ENCODE measurements at regions of chr15 and their contacts with region 1.

Region 1: DNA sequence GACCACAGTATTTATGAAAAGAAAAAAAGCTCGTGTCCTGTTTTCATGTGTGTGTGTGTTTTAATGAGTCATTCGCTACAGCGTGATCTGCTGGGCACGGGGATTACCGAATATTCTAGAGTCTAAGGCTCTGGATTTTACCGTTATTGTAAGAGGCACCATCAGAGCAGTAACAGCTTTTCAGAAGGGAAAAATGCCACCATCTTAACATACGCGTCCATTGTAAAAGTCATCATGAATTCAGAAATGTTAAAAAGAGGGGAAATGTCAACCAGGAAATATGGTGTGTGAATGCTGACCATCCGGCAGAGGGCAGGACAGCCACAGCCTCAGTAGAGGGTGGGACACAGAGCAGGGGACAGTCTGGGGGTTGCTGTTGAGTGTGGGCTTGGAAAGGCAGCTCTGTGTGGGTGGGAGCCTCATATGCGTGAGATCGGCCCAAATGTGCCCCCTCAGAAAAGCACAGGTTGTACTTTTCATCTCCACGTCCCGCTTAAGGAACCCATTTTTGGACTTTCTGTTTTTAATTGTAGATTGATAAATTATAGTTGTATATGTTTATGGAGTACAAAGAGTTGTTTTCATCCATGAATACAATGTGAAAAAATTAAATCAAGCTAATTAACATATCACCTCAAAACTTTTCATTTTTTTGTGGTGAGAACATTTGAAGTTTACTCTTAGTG is 69.6 kb downstream of the ASB7 start:
- DNase-seq: peak; percentile 85
- H3K4me3 ChIP-seq: no peak overlapping the region
- H3K27ac ChIP-seq: peak overlapping the region in 1 of 2 experiments; percentile 74; a peak in 2 of 4 replicates
- H3K4me1 ChIP-seq: peaks cover 0 to 23% of the 10 kb centered on the region in 2 experiments; a peak in 2 of 4 replicates
- H3K27me3 ChIP-seq: no peaks in the 10 kb centered on the region
- CTCF ChIP-seq: peak; percentile 76
- EP300 ChIP-seq: no peak
- RAD21 ChIP-seq: peak; percentile 93

Region 2: GRCh38 chr15:100508641-100509300 is 163.2 kb before region 1 on chr15:
- CTCF ChIA-PET with region 1: no interaction called
- POLR2A ChIA-PET with region 1: no interaction called
- DNase-seq: no peak
- H3K4me3 ChIP-seq: no peak overlapping the region
- H3K27ac ChIP-seq: no peak overlapping the region
- H3K4me1 ChIP-seq: peaks cover 0 to 3% of the 10 kb centered on the region in 2 experiments; a peak in 1 of 4 replicates
- H3K27me3 ChIP-seq: no peaks in the 10 kb centered on the region
- CTCF ChIP-seq: no peak
- EP300 ChIP-seq: no peak
- RAD21 ChIP-seq: no peak

Region 3: GRCh38 chr15:100602064-100602822 is 69.8 kb before region 1 on chr15 and contains the starts of genes ASB7 and LINS1:
- CTCF ChIA-PET with region 1: no interaction called
- POLR2A ChIA-PET with region 1: no interaction called
- DNase-seq: peak; percentile 94
- H3K4me3 ChIP-seq: peak within 1 kb of the TSS; percentile 89 to 99
- H3K27ac ChIP-seq: peak within 1 kb of the TSS; percentile 63 to 87
- H3K4me1 ChIP-seq: peaks cover 5 to 18% of the 10 kb centered on the region in 2 experiments; a peak in 3 of 4 replicates
- H3K27me3 ChIP-seq: no peaks in the 10 kb centered on the region
- CTCF ChIP-seq: no peak
- EP300 ChIP-seq: peak in 1 of 2 experiments; percentile 4; a peak in 1 of 4 replicates
- RAD21 ChIP-seq: no peak
- polyA plus RNA-seq, gene ASB7: 6.1 and 7.7 TPM in 2 replicates
- polyA plus RNA-seq, gene LINS1: 5.0 and 6.9 TPM in 2 replicates

Region 4: DNA sequence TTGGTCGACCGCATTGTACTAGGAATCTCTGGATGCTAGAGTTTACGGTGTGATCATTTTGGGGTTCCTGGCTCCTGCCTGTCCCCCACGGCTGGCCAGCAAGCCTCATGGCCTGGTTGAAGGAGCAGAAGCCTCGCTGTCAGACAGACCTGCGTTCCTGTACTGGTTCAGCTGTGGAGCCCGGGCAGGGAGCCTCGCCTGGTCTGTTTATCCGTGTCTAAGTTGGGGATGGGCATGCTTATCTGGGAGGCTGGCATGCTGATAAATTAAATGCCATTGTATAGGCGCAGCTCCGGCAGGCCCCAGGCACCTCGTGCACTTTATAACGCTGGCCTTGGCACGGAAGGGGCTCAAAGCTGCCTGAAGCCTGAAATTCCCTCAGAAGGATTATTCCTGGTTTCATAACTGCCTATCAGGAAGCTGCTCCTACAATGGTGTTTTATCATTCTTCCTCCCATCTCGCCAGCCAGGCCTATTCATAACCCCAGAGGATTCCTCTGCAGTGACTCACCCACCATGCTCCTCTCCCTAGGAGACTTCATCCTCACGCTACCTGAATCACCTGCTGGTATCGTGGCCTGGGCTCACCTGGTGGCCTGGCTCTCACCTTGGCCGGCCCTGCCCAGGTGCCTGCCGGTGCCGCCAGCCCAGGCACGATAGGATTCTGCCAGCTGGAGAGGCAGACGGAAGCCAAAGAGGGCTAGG is 41.3 kb after region 1 on chr15:
- CTCF ChIA-PET with region 1: no interaction called
- POLR2A ChIA-PET with region 1: no interaction called
- DNase-seq: no peak
- H3K4me3 ChIP-seq: no peak overlapping the region
- H3K27ac ChIP-seq: peak overlapping the region in 1 of 2 experiments; percentile 71; a peak in 2 of 4 replicates
- H3K4me1 ChIP-seq: peaks cover 12 to 24% of the 10 kb centered on the region in 2 experiments; a peak in 3 of 4 replicates
- H3K27me3 ChIP-seq: no peaks in the 10 kb centered on the region
- CTCF ChIP-seq: no peak
- EP300 ChIP-seq: no peak
- RAD21 ChIP-seq: no peak

Region 5: DNA sequence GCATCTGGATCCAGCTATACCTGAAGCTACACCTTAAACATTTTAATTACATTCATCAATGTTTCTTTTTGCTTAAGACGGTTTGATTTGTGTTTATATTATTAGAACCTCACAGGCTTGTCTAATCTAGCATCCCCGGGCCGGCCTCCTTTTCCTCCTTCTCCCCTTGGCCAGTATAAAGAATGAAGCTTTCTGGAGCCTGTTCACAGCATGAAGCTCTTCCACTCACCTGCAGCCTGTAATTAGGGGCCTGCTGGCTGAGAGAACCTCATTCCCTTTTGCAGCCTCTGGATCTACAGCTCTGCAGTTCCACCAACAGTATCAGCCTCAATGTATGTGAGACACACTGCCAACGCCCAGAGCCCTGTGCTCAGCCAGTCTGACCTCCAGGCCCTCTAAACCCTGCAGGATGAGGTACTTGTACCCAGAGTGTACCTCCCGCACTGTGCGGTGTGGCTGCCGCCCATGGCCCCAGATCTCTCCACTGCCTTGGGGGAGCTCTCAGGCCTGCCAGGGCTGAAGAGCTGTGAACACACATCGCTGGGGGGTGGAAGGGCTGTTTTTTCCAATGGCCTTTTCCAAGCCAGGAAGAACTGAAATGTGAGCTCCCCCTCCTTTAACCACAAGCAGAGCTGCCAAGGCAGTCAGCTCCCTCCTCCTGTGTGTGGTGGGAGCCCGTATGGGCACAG is 92.9 kb after region 1 on chr15:
- CTCF ChIA-PET with region 1: interaction called, 14 read pairs
- POLR2A ChIA-PET with region 1: no interaction called
- DNase-seq: peak; percentile 45
- H3K4me3 ChIP-seq: no peak overlapping the region
- H3K27ac ChIP-seq: peak overlapping the region; percentile 44 to 94; a peak in 3 of 4 replicates
- H3K4me1 ChIP-seq: peaks cover 8 to 80% of the 10 kb centered on the region in 2 experiments; a peak in 3 of 4 replicates
- H3K27me3 ChIP-seq: no peaks in the 10 kb centered on the region
- CTCF ChIP-seq: no peak
- EP300 ChIP-seq: peak in 1 of 2 experiments; percentile 68; a peak in 1 of 4 replicates
- RAD21 ChIP-seq: no peak

Region 6: DNA sequence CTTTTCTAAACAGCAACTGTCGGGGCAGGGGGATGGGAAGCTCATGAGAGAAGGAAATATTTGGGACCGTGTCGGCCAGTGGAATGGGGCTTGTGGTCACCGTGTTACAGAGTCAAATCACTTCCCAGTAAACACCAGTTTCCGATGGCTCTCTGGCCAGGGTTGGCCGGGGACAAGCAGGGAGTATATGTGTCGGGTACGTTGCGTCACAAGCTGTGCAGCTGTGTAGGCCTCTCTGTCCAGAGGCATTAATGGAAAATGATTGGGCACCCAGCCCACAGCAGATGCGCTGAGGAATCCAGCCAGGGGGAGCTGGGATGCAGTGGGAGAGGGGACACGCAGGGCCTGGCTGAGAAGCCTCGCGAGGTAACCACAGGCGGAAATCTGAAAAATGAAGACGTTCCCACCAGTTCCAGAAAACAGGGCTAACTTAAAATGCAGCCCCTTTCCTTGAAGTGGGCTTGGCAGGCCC is 191.8 kb after region 1 on chr15:
- CTCF ChIA-PET with region 1: interaction called, 87 read pairs
- POLR2A ChIA-PET with region 1: no interaction called
- DNase-seq: no peak
- H3K4me3 ChIP-seq: no peak overlapping the region
- H3K27ac ChIP-seq: no peak overlapping the region
- H3K4me1 ChIP-seq: peaks cover 0 to 10% of the 10 kb centered on the region in 2 experiments; a peak in 1 of 4 replicates
- H3K27me3 ChIP-seq: no peaks in the 10 kb centered on the region
- CTCF ChIP-seq: no peak
- EP300 ChIP-seq: no peak
- RAD21 ChIP-seq: no peak

Region 7: DNA sequence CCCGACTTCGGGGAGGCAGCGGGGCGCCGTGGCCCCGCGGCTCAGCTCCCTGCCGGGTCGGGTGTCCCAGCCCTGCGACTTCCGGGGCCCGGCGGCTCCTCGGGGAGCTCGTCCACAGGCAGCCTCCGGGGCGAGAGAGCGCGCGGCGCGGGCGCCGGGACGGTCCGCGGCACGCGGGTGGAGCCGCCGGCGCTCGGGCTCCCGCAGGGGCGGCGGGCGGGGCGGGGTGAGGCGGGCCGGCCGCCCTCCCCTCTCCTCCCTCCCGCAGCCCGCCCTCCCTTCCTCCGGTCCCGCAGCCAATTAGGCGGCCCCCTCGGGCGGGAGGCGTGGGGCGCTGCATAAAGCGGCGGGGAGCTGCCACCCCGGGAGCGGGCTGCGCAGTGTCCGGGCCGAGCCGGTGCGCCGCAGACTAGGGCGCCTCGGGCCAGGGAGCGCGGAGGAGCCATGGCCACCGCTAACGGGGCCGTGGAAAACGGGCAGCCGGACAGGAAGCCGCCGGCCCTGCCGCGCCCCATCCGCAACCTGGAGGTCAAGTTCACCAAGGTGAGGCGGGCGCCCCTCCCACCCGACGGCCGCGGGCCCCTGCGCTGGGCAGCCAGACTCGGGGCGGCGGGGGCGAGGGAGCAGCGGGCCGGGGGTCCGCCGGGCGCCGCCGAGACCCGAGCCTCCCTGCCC is 207.6 kb after region 1 on chr15 and contains the start of gene ALDH1A3:
- CTCF ChIA-PET with region 1: interaction called, 18 read pairs
- POLR2A ChIA-PET with region 1: no interaction called
- DNase-seq: peak; percentile 92
- H3K4me3 ChIP-seq: peak within 1 kb of the TSS; percentile 37 to 57; a peak in 3 of 4 replicates
- H3K27ac ChIP-seq: peak within 1 kb of the TSS in 1 of 2 experiments; percentile 73; a peak in 2 of 4 replicates
- H3K4me1 ChIP-seq: peaks cover 0 to 39% of the 10 kb centered on the region in 2 experiments; a peak in 1 of 4 replicates
- H3K27me3 ChIP-seq: no peaks in the 10 kb centered on the region
- CTCF ChIP-seq: no peak
- EP300 ChIP-seq: no peak
- RAD21 ChIP-seq: no peak
- polyA plus RNA-seq, gene ALDH1A3: 3.1 and 4.4 TPM in 2 replicates

Region 8: DNA sequence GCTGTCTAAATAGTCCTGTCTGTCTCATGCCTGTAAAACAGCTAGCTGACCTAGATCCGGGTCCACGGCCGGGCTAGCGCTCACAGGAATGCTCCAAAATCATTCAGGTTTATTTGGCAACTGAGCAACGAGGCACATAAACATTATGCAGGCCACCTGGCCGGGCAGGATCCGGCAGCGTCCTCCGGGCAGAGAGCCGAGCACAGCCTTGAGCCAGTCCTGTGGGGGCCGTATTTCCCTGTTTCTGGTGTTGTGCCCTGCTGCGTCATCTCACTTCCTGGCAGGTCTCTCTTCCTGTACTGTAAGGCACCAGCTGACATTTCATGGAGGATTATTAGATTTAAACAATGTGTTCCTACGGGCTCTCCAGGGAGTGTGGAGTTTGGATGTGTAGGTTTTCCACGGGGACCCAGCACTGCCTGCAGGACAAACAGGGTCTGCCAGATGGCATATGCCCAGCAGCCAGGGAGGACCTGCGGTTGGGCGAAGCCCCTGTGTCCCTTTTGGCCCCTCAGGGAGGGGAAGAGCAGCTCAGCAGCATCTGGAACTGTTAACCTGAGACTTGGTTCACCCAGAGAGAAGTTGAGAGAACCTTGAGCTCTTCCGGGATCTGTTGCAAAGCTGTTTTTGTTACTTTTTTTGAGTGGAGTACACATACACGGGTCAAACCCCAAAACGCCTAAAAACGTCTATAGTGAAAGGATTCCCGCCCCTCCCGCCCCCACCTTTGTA is 230.6 kb after region 1 on chr15:
- CTCF ChIA-PET with region 1: interaction called, 10 read pairs
- POLR2A ChIA-PET with region 1: no interaction called
- DNase-seq: peak; percentile 87
- H3K4me3 ChIP-seq: peak overlapping the region; percentile 26 to 33; a peak in 3 of 4 replicates
- H3K27ac ChIP-seq: peak overlapping the region; percentile 60 to 98
- H3K4me1 ChIP-seq: peaks cover 12 to 44% of the 10 kb centered on the region in 2 experiments
- H3K27me3 ChIP-seq: no peaks in the 10 kb centered on the region
- CTCF ChIP-seq: no peak
- EP300 ChIP-seq: peak in 1 of 2 experiments; percentile 75; a peak in 2 of 4 replicates
- RAD21 ChIP-seq: peak; percentile 36

Region 9: DNA sequence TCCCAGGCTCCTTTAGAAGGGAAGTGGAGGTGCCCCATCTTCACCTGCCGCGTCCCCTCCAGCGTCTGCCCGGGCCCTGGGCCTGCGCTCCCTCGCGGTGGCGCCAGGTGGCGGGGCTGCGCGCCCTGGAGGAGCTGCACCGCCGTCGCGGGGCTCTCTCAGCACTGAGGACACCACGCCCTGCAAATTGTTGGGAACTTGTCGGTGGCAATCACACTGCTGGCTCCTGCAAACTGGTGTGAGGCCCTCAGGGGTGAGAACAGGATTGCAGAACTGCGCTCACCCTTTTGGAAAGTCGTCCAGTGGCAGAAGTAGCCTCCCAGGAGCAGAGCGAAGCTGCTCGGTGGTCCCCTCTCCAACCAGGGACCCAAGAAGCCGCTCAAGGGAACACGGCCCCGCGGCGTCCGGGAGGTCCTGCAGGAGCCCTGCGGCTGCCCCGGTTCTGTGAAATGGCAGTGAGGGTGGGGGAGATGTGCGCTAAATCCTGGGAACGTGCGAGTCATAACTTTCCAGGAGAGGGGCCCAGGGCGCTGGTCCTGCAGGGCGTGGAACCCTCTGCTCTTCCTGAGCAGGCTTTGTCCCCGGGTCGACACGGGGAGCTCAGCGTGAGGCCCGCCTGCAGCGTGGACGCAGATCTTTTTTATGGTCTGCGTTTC is 246.2 kb after region 1 on chr15:
- CTCF ChIA-PET with region 1: interaction called, 37 read pairs
- POLR2A ChIA-PET with region 1: no interaction called
- DNase-seq: peak; percentile 93
- H3K4me3 ChIP-seq: peak overlapping the region; percentile 67 to 73
- H3K27ac ChIP-seq: peak overlapping the region in 1 of 2 experiments; percentile 16; a peak in 1 of 4 replicates
- H3K4me1 ChIP-seq: peaks cover 0 to 29% of the 10 kb centered on the region in 2 experiments; a peak in 1 of 4 replicates
- H3K27me3 ChIP-seq: no peaks in the 10 kb centered on the region
- CTCF ChIP-seq: peak; percentile 71
- EP300 ChIP-seq: no peak
- RAD21 ChIP-seq: peak; percentile 64